ENCODE measurements at regions of chr3 and their contacts with region 1.

Region 1: DNA sequence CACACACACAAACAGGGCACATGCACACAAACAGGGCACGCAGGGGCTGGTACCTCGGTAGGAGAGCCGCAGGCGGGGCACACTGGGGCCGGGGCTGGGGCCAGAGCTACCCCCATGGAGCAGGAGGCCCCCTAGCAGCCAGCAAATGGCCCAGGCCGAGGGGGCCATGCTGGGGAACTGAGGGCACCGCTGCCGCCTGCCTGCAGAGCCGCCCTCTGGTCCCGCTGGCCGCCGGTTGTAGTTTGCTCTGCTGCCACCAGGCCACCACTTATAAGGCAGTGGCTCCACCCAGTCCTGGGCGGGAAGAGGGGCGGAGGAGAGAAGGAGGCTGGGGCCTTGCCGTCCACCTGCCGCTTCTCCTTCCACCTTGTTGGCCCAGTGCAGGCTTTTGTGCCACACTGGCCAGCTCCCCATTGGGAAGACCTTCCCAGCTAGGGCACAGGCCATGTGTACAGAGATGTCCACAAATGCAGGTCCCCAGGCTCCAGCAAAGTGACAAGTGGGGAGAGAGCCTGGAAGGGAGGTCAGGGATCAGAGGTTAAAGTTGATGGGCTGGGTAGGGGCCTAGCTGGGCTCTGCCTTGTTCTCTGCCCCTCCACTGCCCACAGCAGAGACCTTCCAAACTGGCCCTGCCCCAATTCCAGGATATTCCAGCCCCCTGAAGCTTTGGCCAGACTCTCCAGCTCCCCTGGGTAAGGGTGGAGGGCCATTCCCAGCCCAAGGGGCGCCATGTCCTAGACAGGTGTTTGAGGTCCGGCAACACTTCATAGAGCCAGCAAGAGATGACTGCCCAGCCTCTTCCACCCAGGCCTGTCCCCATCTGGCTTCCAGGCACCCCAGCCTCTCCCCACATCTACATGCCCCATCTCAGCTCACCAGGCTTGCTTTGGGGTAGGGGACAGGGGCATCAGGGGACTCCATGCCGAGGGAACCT is at the start of gene SEMA3G:
- DNase-seq: peak; percentile 68
- H3K4me3 Mint-ChIP-seq: no peak within 1 kb of the TSS
- H3K27ac Mint-ChIP-seq: no peak within 1 kb of the TSS
- H3K4me1 Mint-ChIP-seq: no peaks in the 10 kb centered on the region
- H3K27me3 Mint-ChIP-seq: no peaks in the 10 kb centered on the region
- CTCF ChIP-seq: peak; percentile 23
- total RNA-seq, gene SEMA3G: 0.12 TPM in 1 of 2 replicates, not detected in the other

Region 2: DNA sequence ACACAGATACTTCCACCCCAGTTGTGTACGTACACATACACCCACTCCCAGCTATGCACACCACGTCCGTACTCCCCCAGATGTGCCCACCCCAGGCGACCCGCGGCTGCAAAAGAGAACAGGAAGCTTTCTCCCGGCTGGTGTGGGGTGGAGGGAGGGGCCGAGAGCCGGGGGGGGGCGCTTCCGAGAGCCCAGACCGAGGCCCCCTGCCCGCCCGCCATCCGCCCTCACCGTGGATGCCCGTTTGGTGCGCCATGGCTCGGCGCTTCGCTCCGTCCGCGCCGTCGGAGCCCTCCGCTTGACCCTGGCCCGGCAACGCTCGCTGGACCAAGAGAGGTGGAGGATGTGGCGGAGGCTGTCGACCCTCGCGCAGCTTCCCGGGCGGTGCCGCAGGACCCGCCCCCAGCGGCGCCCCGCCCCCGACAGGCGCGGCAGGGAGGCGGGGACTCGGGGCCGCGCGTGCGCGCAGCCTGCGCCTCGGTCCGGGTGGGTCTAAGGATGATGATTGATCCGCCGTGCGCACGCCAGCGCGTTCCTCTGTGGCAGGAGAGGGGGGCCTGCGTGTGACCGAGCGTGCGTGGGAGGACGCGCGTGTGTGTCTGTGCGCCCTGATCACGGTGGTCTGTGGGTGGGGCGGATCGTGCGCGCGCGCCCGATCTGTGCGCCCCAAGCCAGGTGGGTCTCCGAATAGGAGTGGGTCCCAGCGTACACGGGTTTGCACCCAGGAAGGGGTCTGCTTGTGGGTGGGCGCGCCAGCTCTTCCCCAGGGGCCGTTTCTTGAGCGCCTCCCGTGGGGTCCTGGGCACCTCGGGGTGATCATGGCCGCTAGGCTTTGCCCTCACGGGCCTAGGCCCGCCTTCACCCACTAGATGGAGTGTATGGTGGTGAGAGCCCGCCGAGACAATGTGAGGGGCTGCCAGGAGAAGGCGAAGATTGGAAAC is 206.1 kb before region 1 on chr3 and contains the start of gene TWF2:
- CTCF ChIA-PET with region 1: interaction called, 4 read pairs
- POLR2A ChIA-PET with region 1: no interaction called
- intact Hi-C with region 1: loop called (anchors 10 kb)
- DNase-seq: peak; percentile 70
- H3K4me3 Mint-ChIP-seq: peak within 1 kb of the TSS; percentile 86
- H3K27ac Mint-ChIP-seq: peak within 1 kb of the TSS; percentile 87
- H3K4me1 Mint-ChIP-seq: peaks cover 31% of the 10 kb centered on the region
- H3K27me3 Mint-ChIP-seq: no peaks in the 10 kb centered on the region
- CTCF ChIP-seq: no peak
- total RNA-seq, gene TWF2: 30.5 and 47.0 TPM in 2 replicates

Region 3: GRCh38 chr3:52428151-52429005 is 16.7 kb before region 1 on chr3:
- CTCF ChIA-PET with region 1: interaction called, 278 read pairs
- POLR2A ChIA-PET with region 1: interaction called, 6 read pairs
- intact Hi-C with region 1: loop called (anchors 1 kb)
- DNase-seq: peak; percentile 83
- H3K4me3 Mint-ChIP-seq: no peak overlapping the region
- H3K27ac Mint-ChIP-seq: no peak overlapping the region
- H3K4me1 Mint-ChIP-seq: no peaks in the 10 kb centered on the region
- H3K27me3 Mint-ChIP-seq: peaks cover 11% of the 10 kb centered on the region
- CTCF ChIP-seq: peak; percentile 63

Region 4: GRCh38 chr3:52455283-52456168 is 10.4 kb after region 1 on chr3 and contains the start of gene NISCH:
- CTCF ChIA-PET with region 1: interaction called, 29 read pairs
- POLR2A ChIA-PET with region 1: interaction called, 4 read pairs
- intact Hi-C with region 1: no loop called
- DNase-seq: peak; percentile 83
- H3K4me3 Mint-ChIP-seq: peak within 1 kb of the TSS; percentile 92
- H3K27ac Mint-ChIP-seq: peak within 1 kb of the TSS; percentile 95
- H3K4me1 Mint-ChIP-seq: peaks cover 26% of the 10 kb centered on the region
- H3K27me3 Mint-ChIP-seq: no peaks in the 10 kb centered on the region
- CTCF ChIP-seq: no peak
- total RNA-seq, gene NISCH: 60.5 and 69.7 TPM in 2 replicates

Measured in MCF 10A (cell line).